ENCODE measurements at regions of chr5 and their contacts with region 1.

Region 1: DNA sequence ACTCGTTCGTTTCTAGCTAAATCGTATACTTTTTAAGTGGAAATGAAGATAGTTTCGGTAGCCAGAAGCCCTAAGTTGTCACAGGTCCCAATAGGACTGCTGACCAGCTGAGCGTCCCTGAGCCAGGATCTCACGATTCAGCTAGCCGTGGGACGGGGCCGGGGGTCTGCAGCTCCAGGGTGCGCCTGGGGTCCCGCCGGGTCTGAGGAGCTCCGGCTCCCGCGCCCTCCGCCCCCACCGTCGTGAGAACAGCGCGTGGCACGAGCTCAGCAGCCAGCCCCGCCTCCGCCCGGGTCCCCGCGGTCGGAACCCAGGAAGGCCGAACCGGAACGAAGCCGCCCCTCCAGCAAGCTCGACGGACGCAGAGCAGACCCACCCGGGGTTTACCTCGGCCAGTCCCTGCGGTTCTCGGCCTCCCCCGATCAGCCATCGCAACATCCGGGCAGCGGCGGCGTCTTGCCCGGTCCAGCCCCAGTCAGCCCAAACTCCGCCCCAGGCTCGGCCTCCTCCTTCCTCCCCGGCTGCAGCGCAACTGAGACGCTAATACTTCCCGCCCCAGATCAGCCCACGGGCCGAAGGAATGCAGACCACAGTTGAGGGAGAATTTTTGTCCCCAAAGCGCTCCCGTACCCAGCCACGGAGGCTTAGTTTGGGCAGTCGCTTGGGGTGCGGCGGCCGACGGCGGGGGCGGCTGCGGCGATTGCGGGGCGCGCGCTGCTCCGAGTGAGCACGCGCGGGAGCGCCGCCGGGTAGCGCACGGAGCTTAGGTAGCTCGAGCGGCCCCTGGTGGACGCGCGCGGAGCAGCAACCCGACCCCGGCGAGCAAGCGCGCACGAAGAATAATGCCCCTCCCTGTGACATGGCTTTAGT is at the start of gene WDR41:
- DNase-seq: peak; percentile 80 to 89 (median 84)
- H3K4me3 ChIP-seq: peak within 1 kb of the TSS; percentile 67 to 95 (median 87)
- H3K27ac ChIP-seq: peak within 1 kb of the TSS; percentile 75 to 98 (median 94)
- H3K27me3 ChIP-seq: no peaks in the 10 kb centered on the region
- CTCF ChIP-seq: peak; percentile 86 to 100 (median 96)
- total RNA-seq, gene WDR41: 43.7 to 80.4 (median 60.8) TPM

Region 2: GRCh38 chr5:77086689-77087483 is 405.1 kb before region 1 on chr5 and contains the start of gene ZBED3:
- intact Hi-C with region 1: loop called in 1 of 2 experiments (anchors 5 kb)
- DNase-seq: peak; percentile 62 to 78 (median 72)
- H3K4me3 ChIP-seq: peak within 1 kb of the TSS; percentile 65 to 95 (median 86)
- H3K27ac ChIP-seq: peak within 1 kb of the TSS; percentile 83 to 99 (median 97)
- H3K27me3 ChIP-seq: no peaks in the 10 kb centered on the region
- CTCF ChIP-seq: peak in 40 of 56 donors; percentile 7 to 49 (median 32)
- total RNA-seq, gene ZBED3: 3.1 to 27.3 (median 10.4) TPM

Region 3: GRCh38 chr5:78359831-78360673 is 868.0 kb after region 1 on chr5 and contains the start of gene SCAMP1:
- intact Hi-C with region 1: loop called in 1 of 2 experiments (anchors 1 kb)
- DNase-seq: peak; percentile 78 to 93 (median 86)
- H3K4me3 ChIP-seq: peak within 1 kb of the TSS; percentile 67 to 100 (median 97)
- H3K27ac ChIP-seq: peak within 1 kb of the TSS; percentile 72 to 98 (median 91)
- H3K27me3 ChIP-seq: no peaks in the 10 kb centered on the region
- CTCF ChIP-seq: peak in 42 of 56 donors; percentile 13 to 61 (median 37)
- total RNA-seq, gene SCAMP1: 54.8 to 153 (median 108) TPM